ENCODE measurements at regions of chr6 and their contacts with region 1.

Region 1: GRCh38 chr6:123329337-123329736 is 307.4 kb downstream of the TRDN start:
- DNase-seq: no peak
- H3K4me3 Mint-ChIP-seq: no peak overlapping the region
- H3K27ac Mint-ChIP-seq: no peak overlapping the region
- H3K4me1 Mint-ChIP-seq: no peaks in the 10 kb centered on the region
- H3K27me3 Mint-ChIP-seq: peaks cover 4% of the 10 kb centered on the region

Region 2: GRCh38 chr6:123233336-123233735 is 96.0 kb before region 1 on chr6:
- CTCF ChIA-PET with region 1: no interaction called
- intact Hi-C with region 1: no loop called
- DNase-seq: no peak
- H3K4me3 Mint-ChIP-seq: no peak overlapping the region
- H3K27ac Mint-ChIP-seq: no peak overlapping the region
- H3K4me1 Mint-ChIP-seq: no peaks in the 10 kb centered on the region
- H3K27me3 Mint-ChIP-seq: no peaks in the 10 kb centered on the region

Region 3: GRCh38 chr6:123372737-123373136 is 43.4 kb after region 1 on chr6:
- CTCF ChIA-PET with region 1: no interaction called
- intact Hi-C with region 1: loop called (anchors 1 kb)
- DNase-seq: no peak
- H3K4me3 Mint-ChIP-seq: no peak overlapping the region
- H3K27ac Mint-ChIP-seq: no peak overlapping the region
- H3K4me1 Mint-ChIP-seq: no peaks in the 10 kb centered on the region
- H3K27me3 Mint-ChIP-seq: no peaks in the 10 kb centered on the region

Measured in activated naive CD4-positive, alpha-beta T cell treated with anti-CD3 and anti-CD28 coated beads for 36 hours (primary cell).